ENCODE measurements at regions of chr5 and their contacts with region 1.

Region 1: GRCh38 chr5:102536323-102536928 is 37.6 kb upstream of the SLCO6A1 start:
- DNase-seq: peak in 2 of 3 donors; percentile 35 to 46
- H3K4me3 ChIP-seq: no peak overlapping the region
- H3K27ac ChIP-seq: no peak overlapping the region
- H3K4me1 ChIP-seq: no peaks in the 10 kb centered on the region
- H3K27me3 ChIP-seq: no peaks in the 10 kb centered on the region

Region 2: DNA sequence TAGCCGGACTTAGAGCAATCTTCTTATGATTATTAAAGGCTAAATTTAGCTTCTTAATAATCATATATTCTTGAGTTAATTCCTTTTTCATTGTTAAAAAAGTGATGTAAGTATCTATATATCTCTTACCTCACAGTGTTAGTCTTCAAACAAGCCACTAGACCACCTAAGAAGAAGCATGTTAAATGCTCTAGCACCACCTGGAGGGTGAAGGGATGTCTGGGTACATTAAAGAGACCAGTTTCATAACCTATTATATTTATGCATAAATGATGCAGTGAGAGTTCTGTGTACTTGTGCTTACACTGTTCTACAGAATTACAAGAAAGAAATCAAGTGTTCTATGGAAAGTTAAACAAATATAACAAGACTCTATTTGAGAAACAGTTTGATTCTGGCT is 18.3 kb after region 1 on chr5:
- CTCF ChIA-PET with region 1: interaction called, 59 read pairs
- POLR2A ChIA-PET with region 1: no interaction called
- DNase-seq: peak; percentile 51 to 76 (median 75)
- H3K4me3 ChIP-seq: no peak overlapping the region
- H3K27ac ChIP-seq: no peak overlapping the region
- H3K4me1 ChIP-seq: no peaks in the 10 kb centered on the region
- H3K27me3 ChIP-seq: no peaks in the 10 kb centered on the region

Measured in common myeloid progenitor, CD34-positive (primary cell).